H1 (cell line): ENCODE measurements at regions of chr7 and their contacts with region 1.

Region 1: GRCh38 chr7:76262683-76263402 is 39.6 kb upstream of the HSPB1 start:
- DNase-seq: peak; percentile 69 to 83
- H3K4me3 ChIP-seq: no peak overlapping the region
- H3K27ac ChIP-seq: no peak overlapping the region
- H3K4me1 ChIP-seq: peaks cover 3 to 32% (median 22%) of the 10 kb centered on the region in 4 experiments
- H3K27me3 ChIP-seq: peaks cover 0 to 5% (median 2%) of the 10 kb centered on the region in 4 experiments; a peak in 3 of 7 replicates
- CTCF ChIP-seq: peak in 2 of 3 experiments; percentile 92 to 95; a peak in 3 of 4 replicates
- EP300 ChIP-seq: no peak
- POLR2A ChIP-seq: no peak
- RAD21 ChIP-seq: peak; percentile 96 to 98

Region 2: GRCh38 chr7:76069238-76069638 is 193.6 kb before region 1 on chr7:
- CTCF ChIA-PET with region 1: interaction called, 50 read pairs
- POLR2A ChIA-PET with region 1: interaction called, 3 read pairs
- DNase-seq: peak in 1 of 2 experiments; percentile 46
- H3K4me3 ChIP-seq: no peak overlapping the region
- H3K27ac ChIP-seq: no peak overlapping the region
- H3K4me1 ChIP-seq: peaks cover 0 to 3% (median 1%) of the 10 kb centered on the region in 4 experiments; a peak in 5 of 7 replicates
- H3K27me3 ChIP-seq: no peaks in the 10 kb centered on the region
- CTCF ChIP-seq: peak; percentile 32 to 69 (median 67)
- EP300 ChIP-seq: no peak
- POLR2A ChIP-seq: no peak
- RAD21 ChIP-seq: peak; percentile 84

Region 3: DNA sequence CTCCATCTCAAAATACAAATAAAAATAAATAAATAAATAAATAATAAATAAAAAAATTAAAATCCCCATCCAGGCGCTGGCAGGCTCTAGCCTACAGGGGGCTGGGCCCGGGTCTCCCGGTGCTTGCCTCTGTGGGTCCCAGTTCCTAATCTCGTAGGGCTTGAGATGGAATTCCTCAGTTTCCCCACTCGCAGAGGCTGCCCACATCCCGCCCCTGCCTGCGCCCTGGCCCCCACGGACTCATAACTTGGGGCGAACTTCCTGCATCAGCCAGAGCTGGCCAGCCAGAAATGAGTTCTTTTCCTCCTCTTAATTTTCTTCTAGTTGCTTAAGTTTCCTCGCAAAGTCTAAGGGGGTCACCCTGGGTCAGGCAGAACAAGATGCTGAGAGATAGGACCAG is 83.2 kb before region 1 on chr7:
- CTCF ChIA-PET with region 1: interaction called, 125 read pairs
- POLR2A ChIA-PET with region 1: interaction called, 13 read pairs
- DNase-seq: no peak
- H3K4me3 ChIP-seq: no peak overlapping the region
- H3K27ac ChIP-seq: no peak overlapping the region
- H3K4me1 ChIP-seq: peaks cover 0 to 3% (median 1%) of the 10 kb centered on the region in 4 experiments; a peak in 3 of 7 replicates
- H3K27me3 ChIP-seq: no peaks in the 10 kb centered on the region
- CTCF ChIP-seq: no peak
- EP300 ChIP-seq: no peak
- POLR2A ChIP-seq: no peak
- RAD21 ChIP-seq: no peak; a peak in 1 of 4 replicates

Region 4: GRCh38 chr7:76191783-76192275 is 71.0 kb before region 1 on chr7:
- CTCF ChIA-PET with region 1: interaction called, 17 read pairs
- POLR2A ChIA-PET with region 1: no interaction called
- DNase-seq: peak; percentile 34 to 71
- H3K4me3 ChIP-seq: no peak overlapping the region
- H3K27ac ChIP-seq: no peak overlapping the region
- H3K4me1 ChIP-seq: peaks cover 0 to 7% (median 4%) of the 10 kb centered on the region in 4 experiments; a peak in 5 of 7 replicates
- H3K27me3 ChIP-seq: no peaks in the 10 kb centered on the region
- CTCF ChIP-seq: no peak
- EP300 ChIP-seq: no peak
- POLR2A ChIP-seq: peak in 1 of 2 experiments; percentile 46; a peak in 1 of 3 replicates
- RAD21 ChIP-seq: no peak

Region 5: GRCh38 chr7:76220185-76221057 is 42.4 kb before region 1 on chr7:
- CTCF ChIA-PET with region 1: interaction called, 12 read pairs
- POLR2A ChIA-PET with region 1: interaction called, 6 read pairs
- DNase-seq: peak; percentile 62 to 84
- H3K4me3 ChIP-seq: peak overlapping the region in 1 of 4 experiments; percentile 10; a peak in 2 of 8 replicates
- H3K27ac ChIP-seq: peak overlapping the region; percentile 64; the same call in 1 of the 2 replicates
- H3K4me1 ChIP-seq: peaks cover 19 to 45% (median 22%) of the 10 kb centered on the region in 4 experiments
- H3K27me3 ChIP-seq: no peaks in the 10 kb centered on the region
- CTCF ChIP-seq: peak; percentile 31 to 50 (median 49); a peak in 3 of 4 replicates
- EP300 ChIP-seq: peak in 1 of 2 experiments; percentile 20; a peak in 1 of 3 replicates
- POLR2A ChIP-seq: peak in 1 of 2 experiments; percentile 49; a peak in 1 of 3 replicates
- RAD21 ChIP-seq: peak; percentile 53 to 68

Region 6: GRCh38 chr7:76252020-76252419 is 10.8 kb before region 1 on chr7:
- CTCF ChIA-PET with region 1: interaction called, 17 read pairs
- POLR2A ChIA-PET with region 1: interaction called, 7 read pairs
- DNase-seq: no peak
- H3K4me3 ChIP-seq: no peak overlapping the region
- H3K27ac ChIP-seq: no peak overlapping the region
- H3K4me1 ChIP-seq: peaks cover 1 to 6% (median 3%) of the 10 kb centered on the region in 4 experiments; a peak in 2 of 7 replicates
- H3K27me3 ChIP-seq: no peaks in the 10 kb centered on the region
- CTCF ChIP-seq: no peak
- EP300 ChIP-seq: no peak
- POLR2A ChIP-seq: no peak
- RAD21 ChIP-seq: no peak

Region 7: DNA sequence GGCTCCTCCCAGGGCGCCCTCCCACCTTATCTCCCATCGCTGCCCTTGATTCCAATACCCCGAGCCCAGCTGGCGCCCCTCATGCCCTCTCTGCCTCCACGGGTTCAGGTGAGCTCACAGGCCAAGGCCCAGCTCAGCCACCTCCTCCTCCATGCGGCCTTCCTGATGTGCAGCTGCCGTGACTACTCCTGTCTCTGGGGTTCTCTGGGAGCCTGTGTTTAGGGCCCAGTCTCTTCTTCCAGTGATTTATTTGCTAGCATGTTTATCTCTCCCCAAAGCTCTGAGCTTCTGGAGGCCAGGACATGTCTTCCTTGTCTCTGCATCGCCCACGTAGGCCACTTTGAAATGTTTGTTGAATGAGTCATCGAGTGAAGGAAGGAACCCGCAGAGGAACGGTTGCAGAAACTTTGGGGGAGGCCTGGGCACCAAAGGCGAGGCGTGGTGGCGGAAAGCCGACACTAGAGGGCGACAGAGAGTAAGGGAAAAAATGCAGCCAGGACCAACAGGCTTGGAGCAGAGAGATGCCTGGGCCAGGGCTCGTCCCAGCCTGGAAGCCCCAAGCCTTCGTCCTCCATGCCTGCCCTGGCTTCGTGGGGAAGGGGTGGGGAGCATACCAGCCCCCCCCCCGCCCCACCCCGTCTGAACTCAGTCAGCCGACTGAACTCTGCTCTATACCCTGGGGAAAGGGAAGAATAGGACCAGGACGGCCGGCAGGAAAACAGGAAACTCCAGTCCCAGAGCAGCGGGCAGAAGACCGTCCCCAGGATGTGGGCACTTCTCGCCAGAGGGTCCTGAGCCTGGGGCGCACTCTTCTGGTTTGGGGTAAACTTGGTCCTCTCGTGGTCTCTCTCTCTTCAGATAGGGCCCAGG is 28.7 kb after region 1 on chr7:
- CTCF ChIA-PET with region 1: interaction called, 12 read pairs
- POLR2A ChIA-PET with region 1: interaction called, 3 read pairs
- DNase-seq: peak; percentile 91 to 99
- H3K4me3 ChIP-seq: peak overlapping the region in 1 of 4 experiments; percentile 23; a peak in 1 of 8 replicates
- H3K27ac ChIP-seq: peak overlapping the region; percentile 53; the same call in 1 of the 2 replicates
- H3K4me1 ChIP-seq: peaks cover 0 to 22% (median 11%) of the 10 kb centered on the region in 4 experiments; a peak in 6 of 7 replicates
- H3K27me3 ChIP-seq: no peaks in the 10 kb centered on the region
- CTCF ChIP-seq: peak; percentile 94 to 99 (median 95)
- EP300 ChIP-seq: peak in 1 of 2 experiments; percentile 34; a peak in 1 of 3 replicates
- POLR2A ChIP-seq: no peak
- RAD21 ChIP-seq: peak; percentile 89 to 92